Activated T-helper 1 cell treated with anti-CD3 and anti-CD28 coated beads, Interleukin-12 subunit alpha, Interleukin-12 subunit beta, Interleukin-2, Interleukin-4 antibody, amounts not matched to agents 30 ng/mL and 10 ng/mL and 1 ng/mL, durations not matched to agents 14 hours and 24 hours and 36 hours (primary cell): ENCODE measurements at regions of chr1 and their contacts with region 1.

Region 1: DNA sequence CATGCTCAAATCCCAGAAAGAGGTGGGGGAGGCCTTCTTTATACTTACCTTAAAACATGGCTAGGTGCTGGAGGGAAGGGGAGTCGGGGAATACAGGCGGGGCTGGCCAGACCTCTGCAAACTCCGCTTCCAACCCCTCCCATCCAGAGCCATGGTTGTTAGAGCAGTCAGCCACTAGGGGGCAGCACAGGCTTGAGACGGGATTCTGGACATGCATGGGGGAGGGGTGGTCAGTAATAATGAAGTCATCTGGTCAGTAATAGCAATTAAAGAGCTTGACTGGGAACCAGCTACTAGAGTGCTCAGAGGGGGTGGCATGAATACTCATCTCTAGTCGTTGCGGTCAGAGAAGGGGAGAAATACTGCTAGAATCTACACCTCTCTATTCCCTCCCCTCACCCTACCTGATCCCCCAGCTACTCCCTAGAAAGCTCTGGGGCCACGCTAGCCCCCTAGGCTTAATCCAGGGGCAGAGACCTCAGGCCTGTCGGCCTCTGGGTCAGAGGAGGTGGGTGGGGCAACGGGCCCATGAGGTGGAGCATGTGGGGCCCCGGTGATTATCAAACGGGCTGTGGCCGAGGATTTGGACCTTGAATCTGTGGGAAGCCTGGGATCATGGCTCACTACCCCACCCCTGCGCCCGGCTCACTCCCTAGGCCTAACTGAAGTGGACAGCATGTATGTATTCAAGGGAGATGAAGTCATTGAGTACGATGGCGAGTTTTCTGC is 2.9 kb downstream of the CASQ1 start:
- DNase-seq: peak; percentile 63
- H3K4me3 Mint-ChIP-seq: no peak overlapping the region
- H3K27ac Mint-ChIP-seq: no peak overlapping the region
- H3K4me1 Mint-ChIP-seq: no peaks in the 10 kb centered on the region
- H3K27me3 Mint-ChIP-seq: no peaks in the 10 kb centered on the region

Region 2: DNA sequence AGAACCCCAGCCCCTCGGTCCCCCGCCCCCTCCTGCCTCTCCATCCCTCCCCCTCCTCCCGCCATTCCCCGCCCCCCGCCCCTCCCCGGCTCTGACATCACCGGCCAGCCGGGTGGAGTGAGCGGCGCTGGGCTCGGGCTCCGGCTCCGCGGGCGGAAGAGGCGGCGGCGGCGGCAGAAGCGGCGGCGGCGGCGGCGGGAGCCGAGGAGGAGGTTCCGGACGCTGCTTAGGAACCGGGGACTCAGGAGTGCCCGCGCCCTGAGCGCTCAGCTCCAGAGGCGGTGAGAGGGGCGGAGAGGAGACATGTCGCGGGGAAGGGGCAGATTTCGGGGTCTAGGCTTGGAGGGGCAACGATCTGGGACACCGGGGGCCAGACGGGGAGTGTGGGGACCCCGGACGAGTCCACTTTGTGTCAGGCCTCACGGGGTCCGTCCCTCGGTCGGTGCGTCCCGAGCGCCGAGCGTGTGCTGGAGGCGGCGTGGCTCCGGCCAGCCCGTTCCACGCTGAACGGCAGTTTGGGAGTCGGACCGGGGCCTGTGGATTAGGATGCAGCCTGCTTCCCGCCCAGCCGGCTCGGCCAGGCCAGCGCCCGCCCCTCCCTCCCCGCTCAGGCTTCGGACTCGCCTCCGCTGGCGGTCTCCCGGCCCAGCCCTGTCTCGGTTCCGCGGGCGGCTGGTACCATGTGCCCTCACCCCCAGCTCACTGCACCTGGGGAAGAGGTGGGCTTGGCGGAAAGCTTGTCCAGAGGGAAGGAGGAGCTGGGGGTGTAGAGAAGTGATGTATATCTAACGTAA is 12.2 kb after region 1 on chr1 and contains the start of gene PEA15:
- intact Hi-C with region 1: loop called (anchors 1 kb)
- DNase-seq: peak; percentile 69
- H3K4me3 Mint-ChIP-seq: peak within 1 kb of the TSS; percentile 85
- H3K27ac Mint-ChIP-seq: peak within 1 kb of the TSS; percentile 87
- H3K4me1 Mint-ChIP-seq: peaks cover 48% of the 10 kb centered on the region
- H3K27me3 Mint-ChIP-seq: no peaks in the 10 kb centered on the region
- total RNA-seq, gene PEA15: 71.2 and 71.3 TPM in 2 replicates

Region 3: DNA sequence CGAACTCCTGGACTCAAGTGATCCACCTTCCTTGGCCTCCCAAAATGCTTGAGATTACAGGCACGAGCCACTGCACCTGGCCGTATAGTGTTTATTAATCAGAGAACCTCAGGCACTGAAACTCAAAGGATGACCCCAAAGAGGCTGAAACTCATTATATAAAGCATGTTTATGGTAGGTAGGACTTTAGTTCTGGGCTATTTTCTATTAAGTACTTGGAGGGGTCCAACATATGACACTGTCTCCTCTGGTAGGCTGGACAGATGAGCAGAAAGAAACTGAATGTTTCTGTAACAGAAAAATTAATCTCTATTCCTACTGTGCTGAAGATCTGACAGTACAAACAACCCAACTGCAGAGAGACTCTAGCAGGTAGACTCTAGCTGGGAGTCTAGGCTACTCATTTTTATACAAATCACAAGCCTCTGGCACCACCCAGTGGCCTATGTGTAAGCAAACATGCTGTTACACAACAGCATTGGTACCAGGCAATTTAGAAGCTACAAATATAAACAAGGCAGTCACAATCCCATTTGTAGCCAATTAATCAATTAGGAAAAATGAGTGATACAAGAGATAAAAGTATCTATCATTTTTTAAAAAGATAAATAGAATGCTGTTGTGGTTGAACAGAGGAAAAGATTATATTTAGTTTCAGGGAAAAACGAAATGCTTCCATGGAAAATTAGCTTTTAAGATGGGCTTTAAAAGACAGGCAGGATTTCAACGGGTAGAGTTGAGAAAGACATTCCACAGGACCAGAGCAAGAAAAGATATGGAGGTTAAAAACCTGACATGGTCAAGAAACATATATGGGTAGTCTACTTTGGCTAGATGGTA is 58.7 kb after region 1 on chr1:
- intact Hi-C with region 1: loop called (anchors 1 kb)
- DNase-seq: peak; percentile 36
- H3K4me3 Mint-ChIP-seq: no peak overlapping the region
- H3K27ac Mint-ChIP-seq: peak overlapping the region; percentile 68
- H3K4me1 Mint-ChIP-seq: peaks cover 13% of the 10 kb centered on the region
- H3K27me3 Mint-ChIP-seq: no peaks in the 10 kb centered on the region

Region 4: DNA sequence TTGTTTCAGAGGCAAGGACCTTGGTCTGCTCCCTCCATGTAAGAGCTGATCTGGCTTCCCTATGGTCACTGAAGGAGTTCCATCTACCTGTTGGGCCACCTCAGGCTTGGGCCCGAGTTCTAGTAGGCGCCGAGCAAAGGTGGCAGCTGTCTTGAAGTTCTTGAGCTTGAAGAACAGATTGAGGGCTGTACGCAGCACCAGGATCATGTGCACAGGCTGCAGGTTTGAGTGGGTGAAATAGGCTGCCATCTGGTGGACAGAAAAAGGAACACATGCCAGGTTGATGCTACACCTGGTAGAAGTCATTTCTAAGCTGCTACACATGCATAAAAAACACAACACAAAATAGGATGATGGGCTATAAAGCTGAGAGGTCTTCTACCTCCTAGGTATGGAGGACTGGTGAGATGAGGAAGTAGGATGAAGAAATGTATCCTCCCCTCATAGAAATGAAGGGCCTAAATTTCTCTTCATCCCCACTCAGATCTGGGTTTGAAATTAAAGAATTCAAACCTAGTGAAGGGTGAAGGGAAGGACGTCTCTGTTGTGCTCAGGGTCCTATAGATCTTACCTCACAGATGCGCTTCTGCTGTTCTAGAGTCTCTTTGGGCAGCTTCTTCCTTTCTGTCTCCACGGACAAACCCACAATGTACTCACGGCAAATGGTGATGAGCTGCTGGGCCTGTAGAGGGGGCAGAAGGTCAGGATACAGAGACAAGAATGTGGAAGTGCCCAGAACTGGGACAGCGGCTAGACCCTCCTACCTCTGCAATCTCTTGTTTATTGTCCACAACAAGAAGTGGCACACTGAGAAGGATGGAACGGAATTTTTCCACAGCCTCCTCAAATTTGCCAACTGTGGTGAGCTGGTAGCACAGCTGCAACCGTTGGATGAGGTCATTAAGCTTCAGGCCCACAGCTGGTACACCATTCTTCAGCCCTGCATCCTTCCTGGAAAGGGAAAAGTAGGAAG is 98.3 kb after region 1 on chr1:
- intact Hi-C with region 1: loop called (anchors 1 kb)
- DNase-seq: peak; percentile 49
- H3K4me3 Mint-ChIP-seq: no peak overlapping the region
- H3K27ac Mint-ChIP-seq: no peak overlapping the region
- H3K4me1 Mint-ChIP-seq: peaks cover 5% of the 10 kb centered on the region
- H3K27me3 Mint-ChIP-seq: no peaks in the 10 kb centered on the region

Region 5: GRCh38 chr1:160342953-160343869 is 150.0 kb after region 1 on chr1 and contains the starts of genes COPA and NCSTN:
- intact Hi-C with region 1: no loop called
- DNase-seq: peak; percentile 88
- H3K4me3 Mint-ChIP-seq: peak within 1 kb of the TSS; percentile 100
- H3K27ac Mint-ChIP-seq: peak within 1 kb of the TSS; percentile 99
- H3K4me1 Mint-ChIP-seq: peaks cover 61% of the 10 kb centered on the region
- H3K27me3 Mint-ChIP-seq: no peaks in the 10 kb centered on the region
- total RNA-seq, gene COPA: 123 and 126 TPM in 2 replicates
- total RNA-seq, gene NCSTN: 74.8 and 81.6 TPM in 2 replicates